GM10248 (cell line): ENCODE measurements at regions of chr17 and their contacts with region 1.

Region 1: GRCh38 chr17:62134397-62134796 is 69.3 kb upstream of the MED13 start:
- DNase-seq: no peak
- CTCF ChIP-seq: no peak

Region 2: DNA sequence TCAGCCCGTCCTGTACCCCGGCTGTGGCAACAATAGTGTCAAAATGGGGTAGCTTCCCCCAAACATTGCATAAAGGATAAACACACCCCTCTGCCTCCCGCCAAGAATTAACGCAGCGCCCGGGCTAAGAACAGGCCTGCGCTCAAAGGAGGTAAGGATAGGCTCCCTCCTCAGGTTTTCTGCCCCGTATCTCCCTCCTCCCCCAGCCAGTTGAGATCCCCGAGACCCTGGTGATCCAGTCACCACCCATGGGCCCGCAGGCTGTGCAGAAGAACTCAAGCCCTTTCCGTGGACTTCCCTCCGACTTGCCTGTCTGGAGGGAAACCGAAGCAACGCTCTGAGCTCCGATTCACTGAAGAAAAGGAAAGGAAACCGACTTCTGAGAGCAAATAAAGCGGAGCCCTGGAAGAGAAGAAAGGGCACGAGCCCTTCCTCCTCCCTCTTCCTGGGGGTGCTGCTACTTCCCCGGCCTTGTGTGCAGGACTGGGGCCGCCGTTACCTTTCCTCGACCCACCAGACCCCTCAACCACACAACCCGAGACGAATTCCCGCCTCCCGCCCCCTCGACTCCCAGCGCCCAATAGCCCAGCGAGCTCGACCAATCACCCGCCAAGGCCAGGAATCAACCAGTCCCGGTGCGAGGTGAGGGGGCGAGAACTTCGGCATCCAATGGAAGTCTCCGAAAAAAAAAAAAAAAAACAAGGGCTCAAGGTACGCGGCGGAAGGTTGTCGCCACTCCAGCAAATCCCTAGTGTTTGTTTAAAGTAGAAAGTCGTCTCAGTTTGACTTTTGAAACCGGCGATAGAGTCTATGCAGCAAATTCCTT is 271.2 kb before region 1 on chr17 and contains the start of gene BRIP1:
- CTCF ChIA-PET with region 1: no interaction called
- POLR2A ChIA-PET with region 1: no interaction called
- DNase-seq: peak; percentile 94
- CTCF ChIP-seq: no peak

Region 3: DNA sequence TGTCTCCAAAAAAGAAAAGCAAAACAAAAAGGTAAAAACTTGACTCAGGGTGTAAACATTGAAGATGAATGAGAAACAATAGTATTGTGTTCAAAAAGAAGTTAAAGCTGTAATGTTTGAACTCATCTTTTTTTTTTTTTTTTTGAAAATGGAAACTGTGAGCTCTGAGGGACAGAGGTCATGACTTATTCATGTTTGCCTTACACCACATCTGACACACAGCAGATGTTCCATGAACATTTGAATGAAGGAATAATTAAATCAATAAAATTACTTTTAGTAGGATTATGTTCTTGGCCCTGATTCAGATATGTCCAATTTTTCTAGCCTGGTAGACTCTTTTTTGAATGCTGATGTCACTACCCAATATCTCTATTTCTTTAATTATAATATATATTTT is 26.4 kb after region 1 on chr17:
- CTCF ChIA-PET with region 1: no interaction called
- POLR2A ChIA-PET with region 1: interaction called, 11 read pairs
- DNase-seq: no peak
- CTCF ChIP-seq: no peak